ENCODE measurements at regions of chr18 and their contacts with region 1.

Region 1: GRCh38 chr18:72762515-72763122 is 105.2 kb downstream of the NETO1 start:
- DNase-seq: peak; percentile 62
- ATAC-seq: peak; percentile 58; the same call in 2 of the 3 replicates
- H3K4me3 ChIP-seq: no peak overlapping the region
- H3K27ac ChIP-seq: no peak overlapping the region
- H3K4me1 ChIP-seq: no peaks in the 10 kb centered on the region
- H3K27me3 ChIP-seq: no peaks in the 10 kb centered on the region
- CTCF ChIP-seq: peak; percentile 71
- EP300 ChIP-seq: no peak
- POLR2A ChIP-seq: no peak
- RAD21 ChIP-seq: no peak

Region 2: GRCh38 chr18:72672364-72673184 is 90.0 kb before region 1 on chr18:
- CTCF ChIA-PET with region 1: no interaction called
- POLR2A ChIA-PET with region 1: no interaction called
- in situ Hi-C with region 1: no loop called
- intact Hi-C with region 1: no loop called
- DNase-seq: peak; percentile 25
- ATAC-seq: peak; percentile 43; the same call in 1 of the 3 replicates
- H3K4me3 ChIP-seq: no peak overlapping the region
- H3K27ac ChIP-seq: no peak overlapping the region
- H3K4me1 ChIP-seq: no peaks in the 10 kb centered on the region
- H3K27me3 ChIP-seq: peaks cover 1 to 7% of the 10 kb centered on the region in 2 experiments; a peak in 1 of 5 replicates
- CTCF ChIP-seq: peak; percentile 53
- EP300 ChIP-seq: no peak
- POLR2A ChIP-seq: no peak
- RAD21 ChIP-seq: no peak

Region 3: DNA sequence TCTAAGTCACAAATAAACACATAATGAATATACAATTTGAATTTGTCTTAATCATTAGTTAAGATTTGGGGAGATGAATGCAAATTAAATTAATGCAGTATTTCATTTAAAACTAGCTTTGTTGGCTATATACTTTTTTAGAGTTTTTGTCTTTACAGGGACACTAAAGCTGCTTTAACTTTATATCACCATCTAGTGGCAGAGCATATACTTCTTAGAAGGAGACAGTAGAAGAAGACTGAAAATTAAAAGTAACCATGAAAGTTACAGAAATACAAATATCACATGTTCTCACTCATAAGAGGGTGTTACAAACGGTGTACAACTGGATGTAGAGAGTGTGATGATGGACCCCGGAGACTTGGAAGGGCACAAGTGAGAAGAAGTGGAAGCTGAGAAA is 373.5 kb after region 1 on chr18:
- CTCF ChIA-PET with region 1: interaction called, 8 read pairs
- POLR2A ChIA-PET with region 1: no interaction called
- in situ Hi-C with region 1: loop called (anchors 10 kb)
- intact Hi-C with region 1: loop called (anchors 1 kb)
- DNase-seq: peak; percentile 3
- ATAC-seq: peak; percentile 41; the same call in 1 of the 3 replicates
- H3K4me3 ChIP-seq: no peak overlapping the region
- H3K27ac ChIP-seq: no peak overlapping the region
- H3K4me1 ChIP-seq: no peaks in the 10 kb centered on the region
- H3K27me3 ChIP-seq: no peaks in the 10 kb centered on the region
- CTCF ChIP-seq: peak; percentile 23; the same call in 1 of the 2 replicates
- EP300 ChIP-seq: no peak
- POLR2A ChIP-seq: no peak
- RAD21 ChIP-seq: no peak

Region 4: DNA sequence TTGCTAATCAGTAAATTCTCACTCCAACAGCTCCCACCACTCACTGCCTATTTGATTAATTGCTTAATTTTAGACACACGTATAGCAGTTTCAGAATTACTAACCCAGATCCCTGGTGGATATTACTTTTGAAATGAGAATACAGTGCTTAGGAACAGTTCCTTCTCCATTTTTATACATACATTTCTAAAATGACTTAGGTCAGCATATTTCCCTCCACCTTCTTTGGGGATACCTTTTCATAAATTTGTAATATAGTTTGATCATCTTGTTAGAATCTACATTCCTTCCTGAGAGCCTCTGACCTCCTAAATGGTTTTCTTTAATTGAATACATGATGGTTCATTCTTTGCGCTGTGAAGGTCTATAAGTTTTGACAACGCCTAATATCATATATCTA is 385.0 kb after region 1 on chr18:
- CTCF ChIA-PET with region 1: no interaction called
- POLR2A ChIA-PET with region 1: no interaction called
- in situ Hi-C with region 1: loop called (anchors 10 kb)
- intact Hi-C with region 1: no loop called
- DNase-seq: no peak
- ATAC-seq: no peak
- H3K4me3 ChIP-seq: no peak overlapping the region
- H3K27ac ChIP-seq: no peak overlapping the region
- H3K4me1 ChIP-seq: no peaks in the 10 kb centered on the region
- H3K27me3 ChIP-seq: no peaks in the 10 kb centered on the region
- CTCF ChIP-seq: no peak
- EP300 ChIP-seq: no peak
- POLR2A ChIP-seq: no peak
- RAD21 ChIP-seq: no peak

Region 5: DNA sequence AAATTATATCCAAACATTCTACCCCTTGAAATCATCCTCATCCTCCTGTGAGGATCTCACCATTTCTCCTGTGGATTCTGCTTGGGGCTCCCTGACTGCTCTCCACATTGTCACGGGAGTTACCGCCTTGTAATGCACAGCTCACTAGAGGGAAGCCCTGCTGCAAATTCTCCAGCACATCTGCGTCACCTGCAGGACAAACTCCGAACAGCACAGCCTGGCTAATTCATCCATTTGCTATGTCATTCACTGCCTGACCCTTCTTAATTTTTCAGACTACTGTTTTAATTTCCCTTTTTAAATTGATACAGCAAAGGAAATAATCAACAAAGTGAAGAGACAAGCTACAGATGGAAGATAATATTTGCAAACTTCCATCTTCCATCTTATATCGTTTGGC is 757.6 kb after region 1 on chr18:
- CTCF ChIA-PET with region 1: no interaction called
- POLR2A ChIA-PET with region 1: no interaction called
- in situ Hi-C with region 1: loop called (anchors 10 kb)
- intact Hi-C with region 1: no loop called
- DNase-seq: peak; percentile 5
- ATAC-seq: peak; percentile 83
- H3K4me3 ChIP-seq: no peak overlapping the region
- H3K27ac ChIP-seq: no peak overlapping the region
- H3K4me1 ChIP-seq: no peaks in the 10 kb centered on the region
- H3K27me3 ChIP-seq: no peaks in the 10 kb centered on the region
- CTCF ChIP-seq: peak; percentile 46
- EP300 ChIP-seq: no peak
- POLR2A ChIP-seq: no peak
- RAD21 ChIP-seq: no peak

Region 6: DNA sequence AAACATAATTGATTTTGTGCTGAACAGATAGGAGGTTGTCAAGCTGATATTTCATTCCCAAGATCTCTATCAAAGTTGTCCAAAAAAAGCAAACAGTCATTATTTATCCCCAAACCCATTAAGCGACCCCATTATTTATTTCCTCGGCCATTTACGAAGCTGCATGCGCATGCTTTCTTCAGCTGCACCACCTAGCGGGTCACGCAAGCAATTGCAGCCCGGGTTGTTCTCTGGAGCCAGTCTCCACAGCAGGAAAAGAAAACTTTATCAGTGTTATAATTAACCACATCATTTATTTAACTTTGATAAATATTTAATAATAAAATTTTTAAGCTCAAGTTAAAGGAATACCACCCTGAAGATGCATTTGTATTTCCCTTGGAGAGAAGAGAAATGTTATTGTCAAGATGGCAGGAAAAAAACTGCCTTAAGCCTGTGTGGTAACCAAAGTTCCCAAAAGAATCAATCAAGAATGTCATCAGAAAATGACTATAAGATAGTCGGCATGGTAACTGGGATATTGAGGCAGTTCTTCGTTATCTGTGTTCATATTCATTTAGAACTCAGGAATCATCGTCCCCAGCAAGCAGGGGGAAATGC is 1080.3 kb after region 1 on chr18:
- CTCF ChIA-PET with region 1: interaction called, 21 read pairs
- POLR2A ChIA-PET with region 1: no interaction called
- in situ Hi-C with region 1: loop called (anchors 10 kb)
- intact Hi-C with region 1: no loop called
- DNase-seq: peak; percentile 4
- ATAC-seq: peak; percentile 61; the same call in 2 of the 3 replicates
- H3K4me3 ChIP-seq: no peak overlapping the region
- H3K27ac ChIP-seq: no peak overlapping the region
- H3K4me1 ChIP-seq: no peaks in the 10 kb centered on the region
- H3K27me3 ChIP-seq: 0 out of 5 replicates have a peak, but pooled peaks cover 0 to 3% of the 10 kb centered on the region in 2 experiments
- CTCF ChIP-seq: peak; percentile 68
- EP300 ChIP-seq: no peak
- POLR2A ChIP-seq: no peak
- RAD21 ChIP-seq: 0 out of 2 replicates have a peak, but pooled peaks have one; percentile 15

Region 7: GRCh38 chr18:73980289-73980979 is 1217.8 kb after region 1 on chr18:
- CTCF ChIA-PET with region 1: interaction called, 8 read pairs
- POLR2A ChIA-PET with region 1: no interaction called
- in situ Hi-C with region 1: loop called (anchors 25 kb)
- intact Hi-C with region 1: no loop called
- DNase-seq: peak; percentile 9
- ATAC-seq: peak; percentile 83
- H3K4me3 ChIP-seq: no peak overlapping the region
- H3K27ac ChIP-seq: no peak overlapping the region
- H3K4me1 ChIP-seq: no peaks in the 10 kb centered on the region
- H3K27me3 ChIP-seq: peaks cover 0 to 20% of the 10 kb centered on the region in 2 experiments; a peak in 2 of 5 replicates
- CTCF ChIP-seq: peak; percentile 55
- EP300 ChIP-seq: no peak
- POLR2A ChIP-seq: no peak
- RAD21 ChIP-seq: no peak